Common myeloid progenitor, CD34-positive (primary cell): ENCODE measurements at regions of chr15 and their contacts with region 1.

Region 1: GRCh38 chr15:37995461-37996347 is 61.3 kb downstream of the TMCO5A start:
- DNase-seq: peak; percentile 67 to 83 (median 76)
- H3K4me3 ChIP-seq: no peak overlapping the region
- H3K27ac ChIP-seq: no peak overlapping the region
- H3K4me1 ChIP-seq: no peaks in the 10 kb centered on the region
- H3K27me3 ChIP-seq: no peaks in the 10 kb centered on the region

Region 2: DNA sequence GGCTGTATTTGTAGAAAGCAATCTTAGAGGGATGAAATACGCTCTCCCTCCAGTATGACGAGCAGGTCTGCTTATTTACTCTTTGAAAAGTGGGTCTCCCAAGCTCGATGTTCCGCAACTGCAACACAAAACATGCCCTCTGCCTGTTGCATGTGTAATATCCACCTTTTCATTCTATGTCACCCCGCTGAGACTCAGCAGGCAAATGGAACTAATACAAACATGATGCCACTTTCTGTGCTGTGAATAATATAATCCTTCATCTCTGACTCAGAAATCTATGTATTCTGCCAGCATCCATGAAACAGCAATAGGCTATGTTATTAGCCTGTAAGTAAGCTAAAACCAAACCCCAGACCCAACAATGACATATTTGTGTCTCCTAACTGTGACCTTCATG is 262.1 kb before region 1 on chr15:
- CTCF ChIA-PET with region 1: no interaction called
- POLR2A ChIA-PET with region 1: no interaction called
- DNase-seq: no peak
- H3K4me3 ChIP-seq: no peak overlapping the region
- H3K27ac ChIP-seq: no peak overlapping the region
- H3K4me1 ChIP-seq: no peaks in the 10 kb centered on the region
- H3K27me3 ChIP-seq: no peaks in the 10 kb centered on the region

Region 3: GRCh38 chr15:38389924-38390542 is 394.3 kb after region 1 on chr15:
- CTCF ChIA-PET with region 1: interaction called, 23 read pairs
- POLR2A ChIA-PET with region 1: no interaction called
- DNase-seq: peak; percentile 52 to 74 (median 61)
- H3K4me3 ChIP-seq: no peak overlapping the region
- H3K27ac ChIP-seq: no peak overlapping the region
- H3K4me1 ChIP-seq: no peaks in the 10 kb centered on the region
- H3K27me3 ChIP-seq: no peaks in the 10 kb centered on the region